Heart right ventricle (tissue), 16 donors: ENCODE measurements at regions of chr17 and their contacts with region 1.

Region 1: DNA sequence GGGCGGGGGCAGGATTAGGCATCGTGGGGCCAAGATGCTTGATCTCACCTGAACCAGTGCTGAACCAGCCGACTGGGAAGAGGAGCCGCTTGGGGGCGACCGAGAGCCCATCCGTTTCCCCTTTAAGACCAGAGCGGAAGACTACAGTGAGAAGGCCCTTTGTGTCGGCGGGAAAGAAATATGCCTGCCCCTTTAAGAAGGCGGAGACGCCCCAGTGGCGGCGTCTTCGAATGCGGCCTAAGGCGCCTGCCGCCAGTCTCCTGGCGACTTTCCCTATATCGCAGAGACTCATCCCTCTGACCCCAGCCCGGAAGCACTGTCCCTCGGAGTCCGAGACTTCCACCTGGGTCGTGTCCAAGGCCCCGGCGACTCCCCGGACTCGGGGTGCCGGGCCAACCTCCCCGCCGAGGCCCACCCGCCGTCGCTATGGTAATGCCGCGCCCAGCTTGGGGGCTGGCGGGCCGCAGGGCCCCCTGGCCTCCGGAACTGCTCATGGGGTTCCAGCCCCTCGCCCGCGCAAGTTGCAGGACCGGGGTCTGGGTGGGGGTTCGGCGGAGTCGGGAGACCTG is at the start of gene HROB:
- DNase-seq: peak; percentile 95 to 98
- ATAC-seq: peak; percentile 74 to 93 (median 89)
- H3K4me3 ChIP-seq: peak within 1 kb of the TSS; percentile 56 to 89 (median 68)
- H3K27ac ChIP-seq: peak within 1 kb of the TSS in 7 of 10 donors; percentile 15 to 78 (median 55)
- H3K4me1 ChIP-seq: peaks cover 0 to 47% (median 21%) of the 10 kb centered on the region in 9 donors
- H3K27me3 ChIP-seq: peaks cover 0 to 8% (median 0%) of the 10 kb centered on the region in 7 donors
- CTCF ChIP-seq: peak; percentile 86 to 95 (median 90)
- total RNA-seq, gene HROB: 0.49 to 1.9 (median 0.74) TPM

Region 2: DNA sequence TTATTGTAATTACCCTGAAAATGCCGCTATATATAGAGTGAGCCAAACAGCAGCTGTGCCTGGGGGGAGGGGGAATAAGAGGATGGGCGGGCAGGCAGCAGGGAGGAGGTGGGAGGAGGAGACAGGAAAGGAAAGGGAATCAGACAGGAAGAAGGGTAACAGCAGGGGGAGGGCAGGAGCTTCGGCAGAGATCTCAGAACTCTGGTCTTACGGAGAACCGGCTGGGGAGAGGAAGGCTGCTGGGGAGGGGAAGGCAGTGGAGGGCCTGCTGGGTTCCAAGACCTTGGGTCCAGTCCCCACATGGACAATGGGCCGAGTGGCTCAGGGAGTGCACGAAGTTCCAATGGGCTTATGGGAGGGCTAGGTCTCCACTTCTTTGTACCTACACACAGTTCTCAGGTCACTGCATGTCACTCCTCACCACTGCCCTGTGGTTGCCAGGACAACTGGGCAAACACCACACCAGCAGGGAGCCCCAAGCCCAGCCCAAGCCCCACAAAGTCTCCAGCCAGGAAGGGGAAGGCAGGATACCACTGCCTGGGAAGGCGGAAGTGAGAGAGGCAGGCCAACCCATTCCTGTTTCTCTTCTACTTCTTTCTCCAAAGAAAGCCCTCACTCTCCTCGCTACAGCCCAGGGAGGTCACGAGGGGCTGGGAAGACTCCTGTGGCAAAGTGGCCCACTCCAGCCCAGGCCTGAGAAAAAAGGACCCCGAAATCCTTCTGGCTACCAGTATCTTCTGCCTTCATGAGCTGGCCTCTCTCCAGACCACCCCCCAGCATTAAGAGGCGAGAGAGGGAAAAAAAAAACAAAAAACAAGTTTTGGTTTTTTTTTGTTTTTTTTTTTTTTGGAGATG is 45.9 kb before region 1 on chr17:
- intact Hi-C with region 1: no loop called
- DNase-seq: peak; percentile 64 to 90
- ATAC-seq: peak; percentile 26 to 88 (median 82)
- H3K4me3 ChIP-seq: peak overlapping the region in 9 of 10 donors; percentile 10 to 50 (median 38)
- H3K27ac ChIP-seq: peak overlapping the region; percentile 83 to 97 (median 92)
- H3K4me1 ChIP-seq: peaks cover 20 to 78% (median 56%) of the 10 kb centered on the region in 9 donors
- H3K27me3 ChIP-seq: no peaks in the 10 kb centered on the region
- CTCF ChIP-seq: peak in 5 of 9 donors; percentile 15 to 57 (median 31)

Region 3: DNA sequence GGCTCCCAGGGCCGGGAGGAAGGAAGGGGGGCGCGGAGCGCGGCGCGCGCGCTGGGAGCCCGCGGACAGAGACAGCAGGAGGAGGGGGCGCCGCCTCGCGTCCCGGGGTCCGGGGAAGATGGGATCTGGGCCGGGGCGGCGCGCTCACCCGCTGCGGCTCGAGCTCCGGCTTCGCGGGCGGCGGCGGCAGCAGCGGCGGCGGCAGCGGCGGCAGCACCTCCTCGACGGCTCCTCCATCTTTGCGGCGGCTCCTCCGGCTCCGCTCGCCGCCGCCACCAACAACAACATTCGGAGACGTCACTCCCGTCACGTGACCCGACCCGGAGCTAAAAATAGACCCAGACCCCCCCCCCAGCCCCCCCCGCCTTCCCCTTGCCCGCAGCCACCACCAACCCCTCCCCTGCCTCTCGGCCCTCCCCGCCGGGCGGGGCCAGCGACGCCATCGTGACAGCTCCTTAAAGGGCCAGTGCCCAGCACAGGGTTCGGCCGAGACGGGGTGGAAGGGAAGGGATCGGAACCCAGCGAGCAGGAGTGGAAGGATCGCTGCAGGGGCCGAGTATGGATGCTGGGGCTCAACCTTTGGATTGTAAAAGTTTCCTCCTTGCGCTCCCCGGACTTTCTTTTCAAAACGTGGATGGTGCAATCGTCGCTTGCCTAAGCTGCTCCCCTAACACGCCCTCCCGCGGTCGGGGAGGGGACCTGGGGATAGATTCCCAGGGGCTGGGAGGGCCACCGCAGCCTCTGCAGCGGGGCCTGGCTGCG is 18.3 kb before region 1 on chr17 and contains the start of gene HDAC5:
- intact Hi-C with region 1: loop called in 2 of 10 experiments (anchors 2 kb)
- DNase-seq: peak; percentile 96
- ATAC-seq: peak; percentile 97 to 99 (median 98)
- H3K4me3 ChIP-seq: peak within 1 kb of the TSS; percentile 67 to 100 (median 94)
- H3K27ac ChIP-seq: peak within 1 kb of the TSS; percentile 59 to 98 (median 94)
- H3K4me1 ChIP-seq: peaks cover 3 to 54% (median 48%) of the 10 kb centered on the region in 9 donors
- H3K27me3 ChIP-seq: no peaks in the 10 kb centered on the region
- CTCF ChIP-seq: peak; percentile 43 to 84 (median 66)
- total RNA-seq, gene HDAC5: 55.2 to 85.4 (median 68.3) TPM

Region 4: DNA sequence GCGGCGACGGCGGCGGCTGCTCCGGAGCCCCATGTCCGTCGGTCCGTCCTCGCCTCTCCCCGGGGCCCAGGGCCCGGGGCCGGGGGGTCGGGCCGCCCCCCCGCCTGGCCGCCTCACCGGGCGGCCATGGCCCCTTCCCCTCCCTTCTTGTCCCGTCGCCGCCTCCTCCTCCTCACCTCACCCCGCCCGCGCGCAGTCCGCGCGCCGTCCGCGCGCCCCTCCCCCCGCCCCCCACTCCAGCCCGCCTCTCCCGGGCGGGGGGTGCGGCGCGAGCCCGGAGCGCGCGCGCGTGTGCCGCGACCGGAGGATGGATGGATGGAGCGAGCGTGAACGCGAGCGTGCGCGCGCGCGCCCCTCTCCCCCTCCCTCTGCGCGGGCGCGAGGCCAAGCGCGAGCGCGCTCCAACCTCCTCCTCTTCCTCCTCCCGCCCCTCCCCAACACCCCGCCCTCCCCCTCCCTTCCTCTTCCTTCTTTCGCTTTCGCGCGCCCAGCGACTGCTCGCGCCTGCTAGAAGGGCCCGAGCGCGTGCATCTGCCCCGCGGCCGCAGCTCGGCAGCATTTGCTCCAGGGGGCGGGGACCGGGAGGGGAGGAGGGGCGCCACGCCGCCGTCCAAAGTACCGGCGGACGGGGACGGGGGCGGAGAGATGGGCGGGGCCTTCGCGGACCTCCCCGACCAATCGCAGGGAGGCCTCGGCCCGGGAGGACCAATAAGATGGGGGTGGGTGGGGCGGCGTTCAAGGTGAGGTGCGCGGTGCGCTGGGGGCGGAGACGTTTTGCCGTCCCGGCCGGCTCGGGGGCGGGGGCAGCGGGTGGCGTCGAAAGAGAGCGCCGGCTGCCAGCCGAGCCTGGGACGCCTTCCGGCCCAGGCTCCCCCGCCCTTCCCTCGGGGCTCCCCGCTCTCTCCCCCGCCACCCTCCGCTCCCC is 58.0 kb after region 1 on chr17 and contains the start of gene ATXN7L3:
- intact Hi-C with region 1: loop called in 1 of 10 experiments (anchors 5 kb)
- DNase-seq: peak; percentile 99
- ATAC-seq: peak; percentile 93 to 96 (median 96)
- H3K4me3 ChIP-seq: peak within 1 kb of the TSS; percentile 92 to 98 (median 94)
- H3K27ac ChIP-seq: peak within 1 kb of the TSS; percentile 97 to 100 (median 99)
- H3K4me1 ChIP-seq: peaks cover 0 to 53% (median 23%) of the 10 kb centered on the region in 9 donors
- H3K27me3 ChIP-seq: no peaks in the 10 kb centered on the region
- CTCF ChIP-seq: no peak
- total RNA-seq, gene ATXN7L3: 23.7 to 40.6 (median 32.4) TPM

Region 5: DNA sequence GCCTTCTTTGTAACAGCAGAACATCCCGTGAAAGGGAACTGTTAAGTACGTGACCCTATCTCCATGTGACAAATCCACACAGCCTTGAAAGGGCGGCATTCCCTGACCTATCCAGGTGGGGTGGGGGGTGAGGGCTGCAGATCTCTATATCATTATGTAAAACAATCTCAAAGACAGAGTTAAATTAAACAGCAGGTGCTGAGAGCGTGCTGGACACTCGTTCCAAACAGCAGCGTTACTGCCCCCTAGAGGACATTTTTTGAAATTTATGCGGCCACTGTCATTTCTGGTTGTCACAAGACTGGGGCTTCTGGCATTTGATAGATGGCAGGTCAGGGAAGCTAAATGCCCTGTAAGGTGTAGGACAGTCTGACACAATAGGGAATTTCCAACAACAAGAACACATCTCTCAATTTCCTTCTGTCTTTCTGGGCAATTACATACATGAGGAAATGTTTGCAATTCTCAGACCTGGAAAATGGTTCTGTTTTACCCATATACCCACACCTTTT is 189.5 kb after region 1 on chr17:
- intact Hi-C with region 1: loop called in 3 of 10 experiments (anchors 5 kb)
- DNase-seq: peak in 1 of 2 donors; percentile 85
- ATAC-seq: peak in 7 of 8 donors; percentile 8 to 45 (median 40)
- H3K4me3 ChIP-seq: no peak overlapping the region
- H3K27ac ChIP-seq: peak overlapping the region in 1 of 10 donors; percentile 30
- H3K4me1 ChIP-seq: peaks cover under 1 to 58% (median 9%) of the 10 kb centered on the region in 9 donors
- H3K27me3 ChIP-seq: no peaks in the 10 kb centered on the region
- CTCF ChIP-seq: peak; percentile 73 to 90 (median 85)

Region 6: DNA sequence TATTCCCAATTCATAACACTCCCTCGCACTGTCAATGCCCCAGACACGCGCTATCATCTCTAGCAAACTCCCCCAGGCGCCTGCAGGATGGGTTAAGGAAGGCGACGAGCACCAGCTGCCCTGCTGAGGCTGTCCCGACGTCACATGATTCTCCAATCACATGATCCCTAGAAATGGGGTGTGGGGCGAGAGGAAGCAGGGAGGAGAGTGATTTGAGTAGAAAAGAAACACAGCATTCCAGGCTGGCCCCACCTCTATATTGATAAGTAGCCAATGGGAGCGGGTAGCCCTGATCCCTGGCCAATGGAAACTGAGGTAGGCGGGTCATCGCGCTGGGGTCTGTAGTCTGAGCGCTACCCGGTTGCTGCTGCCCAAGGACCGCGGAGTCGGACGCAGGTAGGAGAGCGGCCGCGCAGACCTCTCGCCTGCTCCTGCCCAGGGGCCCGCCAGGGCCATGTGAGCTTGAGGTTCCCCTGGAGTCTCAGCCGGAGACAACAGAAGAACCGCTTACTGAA is 203.2 kb after region 1 on chr17 and contains the start of gene GRN:
- intact Hi-C with region 1: loop called in 1 of 10 experiments (anchors 5 kb)
- DNase-seq: peak; percentile 86 to 96
- ATAC-seq: peak; percentile 97 to 99 (median 98)
- H3K4me3 ChIP-seq: peak within 1 kb of the TSS; percentile 50 to 90 (median 82)
- H3K27ac ChIP-seq: peak within 1 kb of the TSS; percentile 66 to 94 (median 90)
- H3K4me1 ChIP-seq: peaks cover 0 to 57% (median 16%) of the 10 kb centered on the region in 9 donors
- H3K27me3 ChIP-seq: no peaks in the 10 kb centered on the region
- CTCF ChIP-seq: no peak
- total RNA-seq, gene GRN: 113 to 303 (median 154) TPM